Activated CD4-positive, alpha-beta T cell treated with anti-CD3 and anti-CD28 coated beads, Interleukin-2, amount 10 ng/mL, durations not matched to agents 24 days and 14 days (primary cell): ENCODE measurements at regions of chr15 and their contacts with region 1.

Region 1: GRCh38 chr15:86691091-86691663 is 611.5 kb downstream of the AGBL1 start:
- DNase-seq: no peak
- H3K4me3 Mint-ChIP-seq: no peak overlapping the region
- H3K27ac Mint-ChIP-seq: no peak overlapping the region
- H3K4me1 Mint-ChIP-seq: peaks cover 2% of the 10 kb centered on the region
- H3K27me3 Mint-ChIP-seq: peaks cover 2% of the 10 kb centered on the region

Region 2: DNA sequence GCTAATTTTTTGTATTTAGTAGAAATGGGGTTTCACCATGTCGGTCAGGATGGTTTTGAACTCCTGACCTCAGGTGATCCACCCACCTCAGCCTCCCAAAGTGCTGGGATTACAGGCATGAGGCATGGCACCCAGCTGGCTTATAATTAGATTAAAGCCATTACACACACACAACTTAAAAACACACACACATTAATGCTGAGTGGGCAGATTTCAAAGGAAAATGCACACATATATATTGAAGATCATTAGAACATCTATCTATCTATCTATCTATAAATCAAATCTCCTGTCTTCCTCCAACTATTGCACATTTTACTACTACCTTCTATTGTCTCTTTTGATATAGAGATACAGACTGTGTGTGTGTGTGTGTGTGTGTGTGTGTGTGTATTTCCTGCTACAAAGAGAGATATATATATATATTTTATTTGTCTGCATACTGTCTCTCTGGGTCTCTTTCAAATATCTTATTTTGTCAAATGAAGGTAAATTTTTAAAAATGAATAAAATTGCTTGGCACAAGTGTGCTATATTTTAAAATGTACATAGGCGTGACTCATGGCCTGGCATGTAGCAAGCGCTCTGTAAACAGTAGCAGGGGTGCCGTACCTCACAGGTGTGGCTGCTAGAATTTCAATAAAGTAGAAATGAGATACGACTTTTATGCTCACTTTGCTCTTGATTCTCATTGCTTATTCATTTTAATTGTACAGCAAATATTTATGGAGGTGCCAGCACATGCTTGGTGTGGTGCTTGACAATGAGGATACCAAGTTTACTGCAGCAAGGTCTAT is 44.3 kb after region 1 on chr15:
- intact Hi-C with region 1: loop called (anchors 5 kb)
- DNase-seq: no peak
- H3K4me3 Mint-ChIP-seq: no peak overlapping the region
- H3K27ac Mint-ChIP-seq: no peak overlapping the region
- H3K4me1 Mint-ChIP-seq: no peaks in the 10 kb centered on the region
- H3K27me3 Mint-ChIP-seq: no peaks in the 10 kb centered on the region